ENCODE measurements at regions of chr3 and their contacts with region 1.

Region 1: GRCh38 chr3:138186803-138187295 is 252 bp upstream of the ARMC8 start:
- DNase-seq: no peak
- ATAC-seq: peak; percentile 31
- H3K4me3 ChIP-seq: peak overlapping the region; percentile 87 to 97 (median 91)
- H3K27ac ChIP-seq: peak overlapping the region; percentile 97
- H3K4me1 ChIP-seq: peaks cover 53% of the 10 kb centered on the region
- H3K27me3 ChIP-seq: peaks cover 0 to 4% of the 10 kb centered on the region in 2 experiments; a peak in 3 of 5 replicates
- CTCF ChIP-seq: no peak
- EP300 ChIP-seq: no peak
- POLR2A ChIP-seq: no peak
- RAD21 ChIP-seq: no peak

Region 2: GRCh38 chr3:137669519-137670060 is 517.3 kb before region 1 on chr3:
- CTCF ChIA-PET with region 1: no interaction called
- POLR2A ChIA-PET with region 1: no interaction called
- in situ Hi-C with region 1: no loop called
- intact Hi-C with region 1: no loop called
- DNase-seq: peak; percentile 58
- ATAC-seq: peak; percentile 72
- H3K4me3 ChIP-seq: no peak overlapping the region
- H3K27ac ChIP-seq: no peak overlapping the region
- H3K4me1 ChIP-seq: peaks cover 9% of the 10 kb centered on the region; the same call in 1 of the 2 replicates
- H3K27me3 ChIP-seq: no peaks in the 10 kb centered on the region
- CTCF ChIP-seq: no peak
- EP300 ChIP-seq: no peak
- POLR2A ChIP-seq: no peak
- RAD21 ChIP-seq: no peak

Region 3: DNA sequence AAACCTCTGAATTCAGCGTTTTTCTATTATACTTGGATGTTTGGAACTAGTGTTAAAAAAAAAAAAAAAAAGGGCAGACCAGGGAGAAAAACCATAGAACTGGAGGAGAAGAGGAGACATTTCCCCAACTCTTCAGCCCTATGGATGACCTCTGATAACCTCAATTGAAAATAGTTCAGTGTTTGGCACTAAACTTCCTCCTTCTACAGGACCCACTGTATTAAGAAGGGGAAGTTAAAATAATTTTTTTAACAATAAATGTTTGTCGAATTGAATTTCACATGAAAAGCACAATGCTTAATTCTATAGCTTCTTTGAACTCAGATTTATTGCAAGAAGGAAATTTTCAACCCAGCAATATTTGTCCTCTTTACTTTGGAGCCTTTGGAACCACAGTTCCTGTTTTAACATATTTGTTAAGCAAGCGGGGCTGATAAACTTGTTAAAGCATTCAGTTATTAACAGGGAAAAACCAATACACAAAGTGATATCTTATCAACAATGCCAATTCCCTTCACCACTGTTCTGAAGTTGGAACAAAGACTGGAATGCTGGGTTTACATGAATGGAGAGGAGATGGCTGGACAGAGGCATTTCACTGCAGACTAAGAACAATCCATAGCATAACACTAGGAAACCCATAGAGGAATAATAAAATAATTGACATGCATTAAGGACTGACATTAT is 51.6 kb before region 1 on chr3:
- CTCF ChIA-PET with region 1: no interaction called
- POLR2A ChIA-PET with region 1: no interaction called
- in situ Hi-C with region 1: no loop called
- intact Hi-C with region 1: no loop called
- DNase-seq: no peak
- ATAC-seq: no peak
- H3K4me3 ChIP-seq: no peak overlapping the region
- H3K27ac ChIP-seq: no peak overlapping the region
- H3K4me1 ChIP-seq: 0 out of 2 replicates have a peak, but pooled peaks cover 9% of the 10 kb centered on the region
- H3K27me3 ChIP-seq: no peaks in the 10 kb centered on the region; a peak in 1 of 5 replicates
- CTCF ChIP-seq: no peak
- EP300 ChIP-seq: no peak
- POLR2A ChIP-seq: no peak
- RAD21 ChIP-seq: no peak

Region 4: GRCh38 chr3:138148503-138148902 is 38.3 kb before region 1 on chr3:
- CTCF ChIA-PET with region 1: no interaction called
- POLR2A ChIA-PET with region 1: no interaction called
- in situ Hi-C with region 1: no loop called
- intact Hi-C with region 1: no loop called
- DNase-seq: no peak
- ATAC-seq: no peak
- H3K4me3 ChIP-seq: no peak overlapping the region
- H3K27ac ChIP-seq: no peak overlapping the region
- H3K4me1 ChIP-seq: no peaks in the 10 kb centered on the region
- H3K27me3 ChIP-seq: no peaks in the 10 kb centered on the region
- CTCF ChIP-seq: no peak
- EP300 ChIP-seq: no peak
- POLR2A ChIP-seq: no peak
- RAD21 ChIP-seq: no peak

Region 5: DNA sequence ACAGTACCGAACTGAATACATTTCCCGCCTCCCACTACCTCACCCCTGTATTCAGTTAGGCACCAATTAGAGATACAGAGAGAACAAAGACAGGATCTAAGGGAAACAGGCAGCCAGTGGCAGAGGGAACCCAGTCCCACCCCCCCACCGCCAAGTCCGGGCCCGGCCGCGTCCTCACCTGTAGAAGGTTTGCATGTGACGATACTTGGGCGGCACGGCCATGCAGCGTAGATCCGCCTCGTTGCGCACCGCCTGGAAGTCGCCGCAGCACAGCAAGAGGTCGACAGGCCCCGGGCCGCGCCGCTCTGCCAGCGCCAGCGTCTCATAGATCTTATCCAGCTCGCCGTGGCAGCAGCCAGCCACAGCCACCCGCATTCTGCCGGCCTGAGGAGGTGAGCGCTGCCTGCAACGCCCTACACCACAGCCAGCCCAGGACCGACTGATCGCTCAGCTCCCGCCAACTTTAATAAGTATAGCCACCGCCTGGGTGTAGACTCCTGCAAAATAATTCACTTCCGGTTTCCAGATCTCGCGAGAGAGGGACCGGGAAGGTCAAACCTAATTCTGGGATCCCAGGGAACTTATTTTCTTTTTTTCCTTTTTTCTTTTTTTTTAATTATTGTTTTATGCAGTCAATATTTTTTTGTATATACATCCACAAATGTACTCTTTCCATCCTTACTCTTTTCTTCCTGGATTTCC is 12.3 kb before region 1 on chr3 and contains the start of gene DBR1:
- CTCF ChIA-PET with region 1: no interaction called
- POLR2A ChIA-PET with region 1: interaction called, 39 read pairs
- in situ Hi-C with region 1: no loop called
- intact Hi-C with region 1: no loop called
- DNase-seq: peak; percentile 86
- ATAC-seq: peak; percentile 99
- H3K4me3 ChIP-seq: peak within 1 kb of the TSS; percentile 83 to 93 (median 88)
- H3K27ac ChIP-seq: peak within 1 kb of the TSS; percentile 72
- H3K4me1 ChIP-seq: peaks cover 19% of the 10 kb centered on the region
- H3K27me3 ChIP-seq: no peaks in the 10 kb centered on the region; a peak in 1 of 5 replicates
- CTCF ChIP-seq: no peak
- EP300 ChIP-seq: no peak
- POLR2A ChIP-seq: peak; percentile 90 to 99
- RAD21 ChIP-seq: peak; percentile 33; the same call in 1 of the 2 replicates
- total RNA-seq, gene DBR1: 16.7 and 22.7 TPM in 2 replicates

Region 6: GRCh38 chr3:138197058-138197457 is 10.2 kb after region 1 on chr3:
- CTCF ChIA-PET with region 1: no interaction called
- POLR2A ChIA-PET with region 1: interaction called, 12 read pairs
- in situ Hi-C with region 1: no loop called
- intact Hi-C with region 1: no loop called
- DNase-seq: no peak
- ATAC-seq: peak; percentile 74
- H3K4me3 ChIP-seq: no peak overlapping the region
- H3K27ac ChIP-seq: no peak overlapping the region
- H3K4me1 ChIP-seq: 0 out of 2 replicates have a peak, but pooled peaks cover 8% of the 10 kb centered on the region
- H3K27me3 ChIP-seq: no peaks in the 10 kb centered on the region
- CTCF ChIP-seq: no peak
- EP300 ChIP-seq: no peak
- POLR2A ChIP-seq: no peak
- RAD21 ChIP-seq: no peak

Region 7: GRCh38 chr3:138347960-138348753 is 161.3 kb after region 1 on chr3 and contains the start of gene MRAS:
- CTCF ChIA-PET with region 1: no interaction called
- POLR2A ChIA-PET with region 1: no interaction called
- in situ Hi-C with region 1: no loop called
- intact Hi-C with region 1: loop called (anchors 5 kb)
- DNase-seq: peak; percentile 59
- ATAC-seq: peak; percentile 78
- H3K4me3 ChIP-seq: peak within 1 kb of the TSS; percentile 77 to 86 (median 85)
- H3K27ac ChIP-seq: peak within 1 kb of the TSS; percentile 77
- H3K4me1 ChIP-seq: peaks cover 50% of the 10 kb centered on the region
- H3K27me3 ChIP-seq: no peaks in the 10 kb centered on the region
- CTCF ChIP-seq: peak; percentile 73
- EP300 ChIP-seq: 0 out of 4 replicates have a peak, but pooled peaks of 1 of the 2 experiments have one; percentile 8
- POLR2A ChIP-seq: no peak; a peak in 2 of 4 replicates
- RAD21 ChIP-seq: peak; percentile 83
- total RNA-seq, gene MRAS: 36.2 TPM in 2 replicates

Region 8: GRCh38 chr3:138426226-138426625 is 239.4 kb after region 1 on chr3:
- CTCF ChIA-PET with region 1: no interaction called
- POLR2A ChIA-PET with region 1: no interaction called
- in situ Hi-C with region 1: no loop called
- intact Hi-C with region 1: loop called (anchors 10 kb)
- DNase-seq: no peak
- ATAC-seq: peak; percentile 47; the same call in 1 of the 3 replicates
- H3K4me3 ChIP-seq: no peak overlapping the region
- H3K27ac ChIP-seq: no peak overlapping the region
- H3K4me1 ChIP-seq: no peaks in the 10 kb centered on the region
- H3K27me3 ChIP-seq: no peaks in the 10 kb centered on the region; a peak in 1 of 5 replicates
- CTCF ChIP-seq: peak; percentile 56
- EP300 ChIP-seq: no peak
- POLR2A ChIP-seq: no peak
- RAD21 ChIP-seq: 0 out of 2 replicates have a peak, but pooled peaks have one; percentile 25

Measured in HepG2 (cell line).